Right cardiac atrium (tissue), 5 donors: ENCODE measurements at regions of chr6 and their contacts with region 1.

Region 1: GRCh38 chr6:56292505-56293181 is 45.3 kb upstream of the COL21A1 start:
- DNase-seq: no peak
- ATAC-seq: peak; percentile 82 to 90
- H3K4me3 ChIP-seq: no peak overlapping the region
- H3K27ac ChIP-seq: no peak overlapping the region
- H3K4me1 ChIP-seq: peaks cover 4% of the 10 kb centered on the region
- H3K27me3 ChIP-seq: no peaks in the 10 kb centered on the region

Region 2: DNA sequence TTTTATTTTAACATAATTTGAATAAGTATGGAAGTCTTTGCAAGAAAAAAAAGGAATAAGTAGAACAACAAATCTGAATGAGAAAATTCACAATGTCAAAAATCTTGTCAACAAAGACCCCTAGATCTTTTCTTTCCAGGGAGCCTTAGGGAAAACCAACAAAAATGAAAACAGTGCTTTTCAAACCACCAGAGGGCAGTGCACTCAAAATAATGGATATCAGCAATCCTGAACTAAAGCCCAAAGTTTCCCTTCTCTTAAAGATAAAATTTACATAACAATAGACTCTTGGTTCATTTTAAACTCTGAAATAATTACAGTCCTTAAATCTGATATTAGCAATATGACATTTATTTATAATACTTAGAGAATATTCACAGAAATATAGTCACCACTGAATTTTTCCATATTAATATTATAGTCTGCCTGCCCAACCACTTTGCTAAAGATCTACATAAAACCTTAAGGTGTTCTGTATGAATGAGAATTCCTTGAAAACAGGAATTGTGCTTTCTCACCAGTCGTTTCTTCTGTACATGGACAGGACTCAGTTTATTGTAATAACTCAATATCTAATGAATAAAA is 311.9 kb before region 1 on chr6:
- intact Hi-C with region 1: loop called (anchors 5 kb)
- DNase-seq: no peak
- ATAC-seq: no peak
- H3K4me3 ChIP-seq: no peak overlapping the region
- H3K27ac ChIP-seq: no peak overlapping the region
- H3K4me1 ChIP-seq: no peaks in the 10 kb centered on the region
- H3K27me3 ChIP-seq: no peaks in the 10 kb centered on the region